OCI-LY7 (cell line): ENCODE measurements at regions of chr12 and their contacts with region 1.

Region 1: DNA sequence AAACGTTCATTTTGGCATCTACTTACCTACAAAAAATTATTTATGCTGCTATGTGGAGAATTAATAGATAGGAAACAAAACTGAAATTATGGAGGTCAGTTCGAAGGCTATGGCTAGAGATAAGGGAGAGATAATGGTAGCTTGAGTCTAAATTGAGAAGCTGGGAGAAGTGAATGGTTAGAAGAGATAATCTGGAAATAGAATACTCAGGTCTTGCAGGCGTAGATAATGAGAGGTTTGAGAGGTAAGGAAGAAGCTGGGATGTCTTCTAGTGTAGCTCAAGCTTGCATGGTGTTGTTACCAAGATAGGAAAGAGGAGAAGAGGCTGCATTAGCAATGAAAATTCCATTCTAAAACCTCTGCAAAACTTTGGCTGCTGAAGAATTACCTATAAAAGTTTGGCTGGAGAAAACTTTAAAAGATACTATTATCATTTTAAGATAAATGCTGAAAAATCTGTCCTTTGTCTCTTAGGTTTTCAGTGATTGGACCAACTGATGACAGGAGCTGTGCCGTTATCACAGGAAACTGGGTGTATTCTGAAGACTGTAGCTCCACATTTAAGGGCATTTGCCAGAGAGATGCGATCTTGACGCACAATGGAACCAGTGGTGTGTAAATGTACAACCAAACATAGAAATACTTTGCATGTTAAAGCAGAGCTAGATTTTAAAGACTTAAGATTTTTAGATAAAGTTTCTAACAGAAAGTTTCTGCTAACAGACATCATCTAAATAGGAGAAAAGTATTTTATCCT is 14.1 kb downstream of the KLRF2 start:
- DNase-seq: no peak
- H3K4me3 ChIP-seq: no peak overlapping the region
- H3K27ac ChIP-seq: no peak overlapping the region
- H3K4me1 ChIP-seq: no peaks in the 10 kb centered on the region
- CTCF ChIP-seq: no peak

Region 2: GRCh38 chr12:9906873-9907272 is 11.5 kb after region 1 on chr12:
- CTCF ChIA-PET with region 1: interaction called, 6 read pairs
- POLR2A ChIA-PET with region 1: interaction called, 12 read pairs
- intact Hi-C with region 1: no loop called
- DNase-seq: no peak
- H3K4me3 ChIP-seq: no peak overlapping the region
- H3K27ac ChIP-seq: no peak overlapping the region
- H3K4me1 ChIP-seq: no peaks in the 10 kb centered on the region
- CTCF ChIP-seq: no peak

Region 3: DNA sequence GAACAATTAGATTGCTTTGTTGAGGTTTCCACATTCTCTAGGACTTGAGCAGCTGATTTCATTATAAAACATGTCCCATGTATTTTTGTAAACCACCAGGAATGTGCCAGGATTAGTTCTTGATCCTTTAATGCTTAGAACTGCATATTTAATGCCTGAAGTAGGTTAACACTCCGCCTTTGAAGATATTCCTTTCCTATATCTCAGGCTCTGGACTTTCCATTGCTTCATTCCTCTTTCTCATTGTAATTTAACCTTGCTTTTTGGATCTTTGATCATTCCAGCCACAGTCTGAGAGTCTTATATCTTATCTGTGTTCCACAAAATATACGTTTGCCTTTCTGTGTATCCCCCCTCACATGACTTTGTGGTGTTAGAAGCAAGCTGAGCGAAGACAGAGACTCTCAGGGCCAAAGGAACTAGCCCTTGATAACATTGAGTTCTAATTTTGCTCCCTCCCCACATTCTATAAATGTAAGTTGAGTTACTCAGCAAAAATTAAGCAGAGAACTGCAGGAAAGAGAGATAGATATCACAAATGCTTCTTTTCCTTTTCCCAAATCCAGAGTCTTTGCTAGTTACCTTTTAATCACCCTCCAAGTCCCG is 105.9 kb after region 1 on chr12:
- CTCF ChIA-PET with region 1: no interaction called
- POLR2A ChIA-PET with region 1: no interaction called
- intact Hi-C with region 1: no loop called
- DNase-seq: no peak
- H3K4me3 ChIP-seq: no peak overlapping the region
- H3K27ac ChIP-seq: no peak overlapping the region
- H3K4me1 ChIP-seq: no peaks in the 10 kb centered on the region
- CTCF ChIP-seq: no peak